Caco-2 (cell line): ENCODE measurements at regions of chr12 and their contacts with region 1.

Region 1: GRCh38 chr12:56645717-56646446 is at the start of gene ATP5F1B:
- DNase-seq: peak; percentile 97 to 99
- H3K4me3 ChIP-seq: peak within 1 kb of the TSS; percentile 81
- H3K4me3 Mint-ChIP-seq: peak within 1 kb of the TSS; percentile 89
- H3K27ac Mint-ChIP-seq: peak within 1 kb of the TSS; percentile 98
- H3K4me1 ChIP-seq: peaks cover 7% of the 10 kb centered on the region
- H3K4me1 Mint-ChIP-seq: peaks cover 7% of the 10 kb centered on the region
- H3K27me3 ChIP-seq: no peaks in the 10 kb centered on the region
- H3K27me3 Mint-ChIP-seq: no peaks in the 10 kb centered on the region
- CTCF ChIP-seq: no peak
- total RNA-seq, gene ATP5F1B: 740 and 781 TPM in 2 replicates

Region 2: DNA sequence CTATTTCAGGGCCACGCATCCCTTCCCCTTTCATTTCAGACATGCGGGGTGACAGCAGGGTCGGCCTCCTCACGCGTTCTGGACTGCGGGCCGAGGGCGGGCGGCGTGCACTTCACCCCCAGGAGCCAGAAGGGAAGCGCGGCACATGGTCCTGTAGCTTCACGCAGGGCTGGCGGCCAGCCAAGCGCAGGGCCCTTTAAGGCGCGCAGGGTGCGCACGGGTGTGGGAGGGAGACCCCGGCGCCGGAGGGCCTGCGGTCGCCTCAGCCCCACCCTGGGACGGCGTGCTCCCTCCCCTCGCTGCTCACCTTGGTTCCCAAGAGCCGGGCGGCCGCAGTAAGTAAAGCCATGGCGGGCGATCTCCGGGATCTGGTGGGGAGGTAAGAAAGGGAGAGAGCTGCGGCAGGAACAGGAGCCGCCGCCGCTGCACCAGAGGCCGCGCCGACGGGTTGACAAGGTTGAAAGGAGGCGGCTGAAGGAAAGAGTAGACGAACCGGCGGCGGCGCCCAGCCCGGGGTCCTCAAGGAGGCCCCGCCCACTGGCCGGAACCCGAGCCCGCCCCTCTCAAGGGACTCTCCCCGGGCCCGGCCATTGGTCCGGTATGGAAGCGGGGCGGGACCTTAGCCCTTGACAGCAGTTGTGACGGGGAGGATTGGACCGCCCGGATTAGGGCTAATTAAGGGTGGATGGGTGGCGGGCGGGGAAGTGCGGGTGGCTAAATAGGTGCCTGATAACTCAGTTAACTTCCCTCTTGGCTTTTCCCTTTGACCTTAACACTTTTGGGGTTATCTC is 345.8 kb before region 1 on chr12 and contains the start of gene CS:
- CTCF ChIA-PET with region 1: no interaction called
- POLR2A ChIA-PET with region 1: no interaction called
- intact Hi-C with region 1: no loop called
- DNase-seq: peak; percentile 99
- H3K4me3 ChIP-seq: peak within 1 kb of the TSS; percentile 63
- H3K4me3 Mint-ChIP-seq: peak within 1 kb of the TSS; percentile 94
- H3K27ac Mint-ChIP-seq: peak within 1 kb of the TSS; percentile 95
- H3K4me1 ChIP-seq: peaks cover 10% of the 10 kb centered on the region
- H3K4me1 Mint-ChIP-seq: peaks cover 17% of the 10 kb centered on the region
- H3K27me3 ChIP-seq: no peaks in the 10 kb centered on the region
- H3K27me3 Mint-ChIP-seq: no peaks in the 10 kb centered on the region
- CTCF ChIP-seq: no peak
- total RNA-seq, gene CS: 241 and 263 TPM in 2 replicates

Region 3: DNA sequence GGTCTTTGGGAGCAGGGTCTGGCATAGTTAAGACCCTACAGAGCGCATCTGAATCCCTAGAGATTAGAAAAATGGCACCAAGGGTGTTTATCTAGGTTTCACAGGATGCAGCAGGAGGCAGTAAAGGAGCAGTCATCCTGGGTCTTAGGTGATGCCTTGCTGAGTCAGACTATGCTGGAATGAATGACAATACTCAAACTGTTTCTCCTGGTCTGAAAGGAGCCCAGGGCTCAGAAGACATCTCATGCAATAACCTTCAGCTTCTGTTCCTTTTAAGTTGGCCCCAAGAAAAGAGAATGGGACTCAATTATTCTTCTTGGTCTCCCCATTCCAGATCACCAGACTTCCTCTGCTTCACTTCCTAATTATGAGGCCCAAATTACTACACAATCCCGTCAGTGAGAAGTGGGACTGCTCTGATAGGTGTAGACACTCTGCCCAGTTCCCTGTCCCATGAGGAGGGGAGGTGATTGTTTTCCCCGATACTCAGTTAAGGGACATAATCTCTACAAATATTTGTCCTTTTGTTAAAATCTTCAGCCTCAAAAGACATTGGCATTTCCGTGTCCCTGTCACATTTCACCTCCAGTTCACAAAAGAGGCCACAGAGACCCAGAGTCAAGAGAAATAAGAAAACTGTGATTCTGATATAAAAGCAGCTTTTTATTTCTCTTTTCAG is 268.4 kb before region 1 on chr12:
- CTCF ChIA-PET with region 1: no interaction called
- POLR2A ChIA-PET with region 1: interaction called, 16 read pairs
- intact Hi-C with region 1: no loop called
- DNase-seq: peak in 1 of 2 experiments; percentile 45
- H3K4me3 ChIP-seq: no peak overlapping the region
- H3K4me3 Mint-ChIP-seq: peak overlapping the region; percentile 4
- H3K27ac Mint-ChIP-seq: peak overlapping the region; percentile 61
- H3K4me1 ChIP-seq: peaks cover 25% of the 10 kb centered on the region
- H3K4me1 Mint-ChIP-seq: peaks cover 15% of the 10 kb centered on the region
- H3K27me3 ChIP-seq: no peaks in the 10 kb centered on the region
- H3K27me3 Mint-ChIP-seq: no peaks in the 10 kb centered on the region
- CTCF ChIP-seq: no peak

Region 4: GRCh38 chr12:56688129-56688845 is 42.4 kb after region 1 on chr12 and contains the start of gene PTGES3:
- CTCF ChIA-PET with region 1: no interaction called
- POLR2A ChIA-PET with region 1: interaction called, 7 read pairs
- intact Hi-C with region 1: loop called (anchors 2 kb)
- DNase-seq: peak; percentile 98
- H3K4me3 ChIP-seq: peak within 1 kb of the TSS; percentile 68
- H3K4me3 Mint-ChIP-seq: peak within 1 kb of the TSS; percentile 87
- H3K27ac Mint-ChIP-seq: peak within 1 kb of the TSS; percentile 92
- H3K4me1 ChIP-seq: no peaks in the 10 kb centered on the region
- H3K4me1 Mint-ChIP-seq: no peaks in the 10 kb centered on the region
- H3K27me3 ChIP-seq: no peaks in the 10 kb centered on the region
- H3K27me3 Mint-ChIP-seq: no peaks in the 10 kb centered on the region
- CTCF ChIP-seq: no peak
- total RNA-seq, gene PTGES3: 241 and 242 TPM in 2 replicates

Region 5: GRCh38 chr12:56724972-56725722 is 79.3 kb after region 1 on chr12 and contains the start of gene NACA:
- CTCF ChIA-PET with region 1: no interaction called
- POLR2A ChIA-PET with region 1: interaction called, 4 read pairs
- intact Hi-C with region 1: loop called (anchors 1 kb)
- DNase-seq: peak; percentile 98 to 99
- H3K4me3 ChIP-seq: peak within 1 kb of the TSS; percentile 68
- H3K4me3 Mint-ChIP-seq: peak within 1 kb of the TSS; percentile 99
- H3K27ac Mint-ChIP-seq: peak within 1 kb of the TSS; percentile 99
- H3K4me1 ChIP-seq: peaks cover 29% of the 10 kb centered on the region
- H3K4me1 Mint-ChIP-seq: peaks cover 31% of the 10 kb centered on the region
- H3K27me3 ChIP-seq: no peaks in the 10 kb centered on the region
- H3K27me3 Mint-ChIP-seq: no peaks in the 10 kb centered on the region
- CTCF ChIP-seq: no peak
- total RNA-seq, gene NACA: 784 and 804 TPM in 2 replicates